ENCODE measurements at regions of chr2 and their contacts with region 1.

Region 1: GRCh38 chr2:105398699-105399432 is at the start of gene FHL2:
- DNase-seq: peak; percentile 87 to 91
- H3K4me3 ChIP-seq: peak within 1 kb of the TSS; percentile 84
- H3K4me3 Mint-ChIP-seq: peak within 1 kb of the TSS; percentile 97
- H3K27ac Mint-ChIP-seq: peak within 1 kb of the TSS; percentile 90
- H3K4me1 ChIP-seq: peaks cover 40% of the 10 kb centered on the region
- H3K4me1 Mint-ChIP-seq: peaks cover 49% of the 10 kb centered on the region
- H3K27me3 ChIP-seq: no peaks in the 10 kb centered on the region
- H3K27me3 Mint-ChIP-seq: no peaks in the 10 kb centered on the region
- CTCF ChIP-seq: peak; percentile 31 to 42
- total RNA-seq, gene FHL2: 40.5 and 45.4 TPM in 2 replicates

Region 2: GRCh38 chr2:105337124-105338019 is 61.5 kb before region 1 on chr2 and contains the start of gene C2orf49:
- CTCF ChIA-PET with region 1: no interaction called
- POLR2A ChIA-PET with region 1: interaction called, 5 read pairs
- intact Hi-C with region 1: loop called (anchors 2 kb)
- DNase-seq: peak; percentile 91
- H3K4me3 ChIP-seq: peak within 1 kb of the TSS; percentile 90
- H3K4me3 Mint-ChIP-seq: peak within 1 kb of the TSS; percentile 86
- H3K27ac Mint-ChIP-seq: peak within 1 kb of the TSS; percentile 100
- H3K4me1 ChIP-seq: peaks cover 8% of the 10 kb centered on the region; the same call in 1 of the 2 replicates
- H3K4me1 Mint-ChIP-seq: peaks cover 7% of the 10 kb centered on the region
- H3K27me3 ChIP-seq: no peaks in the 10 kb centered on the region
- H3K27me3 Mint-ChIP-seq: no peaks in the 10 kb centered on the region
- CTCF ChIP-seq: no peak
- total RNA-seq, gene C2orf49: 21.1 and 24.8 TPM in 2 replicates

Region 3: DNA sequence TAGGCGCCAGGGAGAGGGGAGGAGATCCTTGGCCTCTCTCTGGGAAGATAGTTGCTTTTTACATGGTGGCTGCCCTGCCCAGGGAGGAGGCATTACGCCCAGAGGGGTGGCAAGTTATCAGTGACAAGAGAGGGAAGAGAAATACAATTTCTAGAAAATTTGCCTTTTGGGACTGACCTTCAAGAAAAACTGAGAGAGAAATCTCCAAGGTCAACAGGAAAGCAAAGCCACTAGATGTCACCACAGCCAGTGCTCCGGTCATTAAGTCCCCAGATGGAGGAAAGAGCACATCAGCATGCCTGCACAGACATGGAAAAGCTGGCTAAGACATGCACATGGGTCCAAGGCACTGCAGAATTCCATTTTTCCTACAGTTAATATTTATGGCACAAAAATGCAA is 21.0 kb before region 1 on chr2:
- CTCF ChIA-PET with region 1: no interaction called
- POLR2A ChIA-PET with region 1: no interaction called
- intact Hi-C with region 1: loop called (anchors 2 kb)
- DNase-seq: peak in 1 of 2 experiments; percentile 40
- H3K4me3 ChIP-seq: no peak overlapping the region
- H3K4me3 Mint-ChIP-seq: no peak overlapping the region
- H3K27ac Mint-ChIP-seq: no peak overlapping the region
- H3K4me1 ChIP-seq: peaks cover 46% of the 10 kb centered on the region
- H3K4me1 Mint-ChIP-seq: peaks cover 27% of the 10 kb centered on the region
- H3K27me3 ChIP-seq: no peaks in the 10 kb centered on the region
- H3K27me3 Mint-ChIP-seq: no peaks in the 10 kb centered on the region
- CTCF ChIP-seq: peak; percentile 21 to 34

Region 4: DNA sequence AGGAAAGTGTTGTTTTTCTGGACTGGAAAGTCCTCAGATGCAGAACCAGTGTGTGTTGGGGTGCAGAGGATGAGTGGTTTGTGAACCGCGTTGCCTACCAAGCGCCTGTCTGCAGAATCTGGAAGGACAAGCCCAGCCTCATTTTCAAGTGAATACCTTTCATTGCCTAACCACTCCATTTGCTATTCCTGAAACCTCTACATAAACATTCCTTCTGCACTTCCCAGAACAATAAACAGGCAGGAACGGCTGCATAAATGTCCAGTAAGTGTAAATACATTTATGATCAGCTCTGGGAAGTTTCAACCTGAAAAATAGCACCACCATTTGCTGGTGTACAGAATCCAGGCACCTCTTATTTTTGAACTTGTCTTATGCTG is 45.3 kb after region 1 on chr2:
- CTCF ChIA-PET with region 1: interaction called, 3 read pairs
- POLR2A ChIA-PET with region 1: no interaction called
- intact Hi-C with region 1: loop called (anchors 5 kb)
- DNase-seq: peak in 1 of 2 experiments; percentile 29
- H3K4me3 ChIP-seq: no peak overlapping the region
- H3K4me3 Mint-ChIP-seq: no peak overlapping the region
- H3K27ac Mint-ChIP-seq: no peak overlapping the region
- H3K4me1 ChIP-seq: peaks cover 18% of the 10 kb centered on the region
- H3K4me1 Mint-ChIP-seq: peaks cover 12% of the 10 kb centered on the region
- H3K27me3 ChIP-seq: no peaks in the 10 kb centered on the region
- H3K27me3 Mint-ChIP-seq: no peaks in the 10 kb centered on the region
- CTCF ChIP-seq: no peak

Measured in Caco-2 (cell line).